ENCODE measurements at regions of chr10 and their contacts with region 1.

Region 1: GRCh38 chr10:114095559-114096337 is 52.1 kb downstream of the ADRB1 start:
- DNase-seq: no peak
- ATAC-seq: peak; percentile 69
- H3K4me3 ChIP-seq: peak overlapping the region; percentile 31; the same call in 1 of the 2 replicates
- H3K27ac ChIP-seq: peak overlapping the region; percentile 50
- H3K4me1 ChIP-seq: peaks cover 47% of the 10 kb centered on the region
- H3K27me3 ChIP-seq: no peaks in the 10 kb centered on the region; a peak in 1 of 4 replicates
- CTCF ChIP-seq: no peak
- EP300 ChIP-seq: peak; percentile 33 to 49; a peak in 2 of 4 replicates
- POLR2A ChIP-seq: no peak
- RAD21 ChIP-seq: peak; percentile 18; the same call in 1 of the 2 replicates

Region 2: GRCh38 chr10:113993489-113993991 is 102.2 kb before region 1 on chr10:
- CTCF ChIA-PET with region 1: no interaction called
- POLR2A ChIA-PET with region 1: no interaction called
- RAD21 ChIA-PET with region 1: no interaction called
- SMC1A ChIA-PET with region 1: no interaction called
- in situ Hi-C with region 1: no loop called
- intact Hi-C with region 1: no loop called
- DNase-seq: no peak
- ATAC-seq: no peak; the same call in 2 of the 3 replicates
- H3K4me3 ChIP-seq: no peak overlapping the region
- H3K27ac ChIP-seq: no peak overlapping the region
- H3K4me1 ChIP-seq: peaks cover 8% of the 10 kb centered on the region
- H3K27me3 ChIP-seq: peaks cover 0 to 1% of the 10 kb centered on the region in 2 experiments; a peak in 2 of 4 replicates
- CTCF ChIP-seq: 0 out of 6 replicates have a peak, but pooled peaks of 1 of the 3 experiments have one; percentile 13
- EP300 ChIP-seq: no peak
- POLR2A ChIP-seq: no peak
- RAD21 ChIP-seq: 0 out of 2 replicates have a peak, but pooled peaks have one; percentile 19

Region 3: GRCh38 chr10:114024876-114025610 is 70.7 kb before region 1 on chr10:
- CTCF ChIA-PET with region 1: interaction called, 3 read pairs
- POLR2A ChIA-PET with region 1: no interaction called
- RAD21 ChIA-PET with region 1: no interaction called
- SMC1A ChIA-PET with region 1: interaction called, 8 read pairs
- in situ Hi-C with region 1: no loop called
- intact Hi-C with region 1: loop called (anchors 5 kb)
- DNase-seq: peak; percentile 86
- ATAC-seq: peak; percentile 90
- H3K4me3 ChIP-seq: peak overlapping the region; percentile 51
- H3K27ac ChIP-seq: peak overlapping the region; percentile 86
- H3K4me1 ChIP-seq: peaks cover 25% of the 10 kb centered on the region
- H3K27me3 ChIP-seq: no peaks in the 10 kb centered on the region
- CTCF ChIP-seq: no peak
- EP300 ChIP-seq: peak; percentile 61 to 78
- POLR2A ChIP-seq: peak; percentile 73
- RAD21 ChIP-seq: peak; percentile 35; the same call in 1 of the 2 replicates

Region 4: GRCh38 chr10:114081911-114082583 is 13.7 kb before region 1 on chr10:
- CTCF ChIA-PET with region 1: interaction called, 3 read pairs
- POLR2A ChIA-PET with region 1: interaction called, 5 read pairs
- RAD21 ChIA-PET with region 1: interaction called, 5 read pairs
- SMC1A ChIA-PET with region 1: interaction called, 15 read pairs
- in situ Hi-C with region 1: no loop called
- intact Hi-C with region 1: no loop called
- DNase-seq: no peak
- ATAC-seq: no peak
- H3K4me3 ChIP-seq: no peak overlapping the region
- H3K27ac ChIP-seq: no peak overlapping the region
- H3K4me1 ChIP-seq: no peaks in the 10 kb centered on the region; the same call in 1 of the 2 replicates
- H3K27me3 ChIP-seq: no peaks in the 10 kb centered on the region
- CTCF ChIP-seq: no peak
- EP300 ChIP-seq: no peak
- POLR2A ChIP-seq: no peak
- RAD21 ChIP-seq: no peak

Region 5: GRCh38 chr10:114131094-114131493 is 35.3 kb after region 1 on chr10:
- CTCF ChIA-PET with region 1: no interaction called
- POLR2A ChIA-PET with region 1: no interaction called
- RAD21 ChIA-PET with region 1: no interaction called
- SMC1A ChIA-PET with region 1: no interaction called
- in situ Hi-C with region 1: no loop called
- intact Hi-C with region 1: no loop called
- DNase-seq: peak; percentile 9
- ATAC-seq: peak; percentile 80
- H3K4me3 ChIP-seq: no peak overlapping the region
- H3K27ac ChIP-seq: no peak overlapping the region
- H3K4me1 ChIP-seq: no peaks in the 10 kb centered on the region
- H3K27me3 ChIP-seq: no peaks in the 10 kb centered on the region
- CTCF ChIP-seq: no peak
- EP300 ChIP-seq: no peak
- POLR2A ChIP-seq: no peak
- RAD21 ChIP-seq: no peak

Region 6: DNA sequence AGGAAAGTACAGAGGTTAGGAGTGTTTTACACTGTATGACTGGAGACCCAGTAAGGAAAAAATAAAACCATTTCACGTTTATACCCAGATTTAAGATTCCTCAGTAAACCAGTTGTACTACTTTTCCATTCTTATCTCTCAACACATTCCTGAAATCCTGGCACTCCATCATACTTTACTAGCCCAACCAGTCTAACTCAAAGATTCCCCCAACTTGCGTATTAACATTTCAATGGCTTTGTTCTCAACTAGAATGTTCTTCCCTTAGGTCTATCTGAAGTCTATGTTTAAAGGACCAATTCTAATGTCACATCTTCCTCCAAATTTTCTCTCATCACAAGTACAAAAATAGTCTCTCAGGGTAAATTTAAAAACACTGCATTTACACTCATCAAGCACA is 70.3 kb after region 1 on chr10:
- CTCF ChIA-PET with region 1: no interaction called
- POLR2A ChIA-PET with region 1: no interaction called
- RAD21 ChIA-PET with region 1: no interaction called
- SMC1A ChIA-PET with region 1: no interaction called
- in situ Hi-C with region 1: no loop called
- intact Hi-C with region 1: no loop called
- DNase-seq: no peak
- ATAC-seq: no peak
- H3K4me3 ChIP-seq: no peak overlapping the region
- H3K27ac ChIP-seq: no peak overlapping the region
- H3K4me1 ChIP-seq: peaks cover 5% of the 10 kb centered on the region
- H3K27me3 ChIP-seq: no peaks in the 10 kb centered on the region
- CTCF ChIP-seq: no peak
- EP300 ChIP-seq: no peak
- POLR2A ChIP-seq: no peak
- RAD21 ChIP-seq: no peak

Measured in GM12878 (cell line).